Mammary epithelial cell (primary cell): ENCODE measurements at regions of chr12 and their contacts with region 1.

Region 1: DNA sequence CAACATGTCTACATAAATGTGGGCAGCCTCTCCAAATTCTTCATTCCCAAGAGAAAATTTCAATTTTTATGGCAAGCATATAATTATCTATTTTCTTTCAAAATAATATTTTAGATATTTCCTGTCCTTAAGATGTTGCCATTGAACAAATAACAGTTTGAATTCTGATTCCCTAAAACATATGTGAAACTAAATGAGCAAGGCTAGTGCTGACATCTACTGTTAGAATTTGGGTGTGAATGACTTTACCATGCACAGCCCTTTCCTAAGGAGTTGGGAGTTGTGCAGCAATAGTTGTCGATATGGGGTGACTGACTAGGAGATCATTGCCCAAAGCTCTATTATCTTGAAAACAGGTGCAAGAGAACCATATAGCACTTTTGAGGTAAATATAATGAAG is 108.2 kb upstream of the SLC38A4 start:
- DNase-seq: peak; percentile 52
- H3K4me3 ChIP-seq: no peak overlapping the region
- H3K27ac ChIP-seq: no peak overlapping the region
- H3K4me1 ChIP-seq: peaks cover 8% of the 10 kb centered on the region
- H3K27me3 ChIP-seq: no peaks in the 10 kb centered on the region
- CTCF ChIP-seq: peak; percentile 70 to 75

Region 2: DNA sequence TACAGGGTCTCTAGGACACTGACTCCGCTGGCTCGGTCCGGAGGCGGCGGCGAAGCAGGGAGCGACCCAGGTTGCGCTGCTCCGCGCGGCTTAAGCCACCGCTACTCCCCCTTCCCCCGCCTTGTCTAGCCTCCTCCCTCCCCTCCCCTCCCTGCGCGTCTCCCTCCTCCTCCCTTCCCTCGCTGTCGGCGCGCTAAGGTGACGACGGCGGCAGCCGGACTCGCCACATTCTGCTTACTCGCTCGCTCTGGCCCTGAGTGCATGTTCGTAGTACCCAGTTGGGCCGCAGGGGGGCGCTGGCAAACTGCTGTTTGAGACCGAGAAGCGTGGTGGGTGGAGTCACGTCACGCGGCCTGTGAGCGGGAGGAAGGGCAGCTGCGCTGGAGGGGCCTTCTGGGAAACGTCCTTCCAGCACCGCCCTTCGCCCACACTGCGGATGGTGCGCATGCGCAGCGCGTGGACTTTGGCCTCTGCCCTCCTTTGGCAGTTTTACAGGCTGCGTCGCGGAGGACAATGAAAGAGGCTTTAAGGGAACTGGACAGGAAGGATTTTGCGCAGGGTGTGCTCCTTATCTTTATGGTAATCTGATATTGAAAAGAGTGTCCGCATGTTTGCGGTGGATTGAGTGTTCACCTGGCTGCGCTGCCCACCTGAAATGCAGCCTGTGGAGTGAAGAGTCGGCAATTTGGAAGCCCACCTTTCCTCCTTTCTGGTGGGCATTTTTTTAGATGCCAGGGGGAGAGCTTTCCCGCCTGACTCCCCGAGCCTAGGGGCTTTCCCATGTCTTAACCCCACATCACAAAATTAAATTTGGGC is 943.3 kb before region 1 on chr12 and contains the start of gene SCAF11:
- CTCF ChIA-PET with region 1: no interaction called
- dilution Hi-C with region 1: no loop called
- in situ Hi-C with region 1: no loop called
- intact Hi-C with region 1: loop called (anchors 1 kb)
- DNase-seq: peak; percentile 100
- H3K4me3 ChIP-seq: peak within 1 kb of the TSS; percentile 53 to 96 (median 67)
- H3K27ac ChIP-seq: peak within 1 kb of the TSS; percentile 83
- H3K4me1 ChIP-seq: peaks cover 23% of the 10 kb centered on the region
- H3K27me3 ChIP-seq: no peaks in the 10 kb centered on the region
- CTCF ChIP-seq: peak; percentile 92 to 95
- total RNA-seq, gene SCAF11: 99.2 to 100 TPM

Region 3: GRCh38 chr12:46124848-46125619 is 808.9 kb before region 1 on chr12:
- CTCF ChIA-PET with region 1: no interaction called
- dilution Hi-C with region 1: no loop called
- in situ Hi-C with region 1: no loop called
- intact Hi-C with region 1: loop called (anchors 2 kb)
- DNase-seq: peak; percentile 74
- H3K4me3 ChIP-seq: peak overlapping the region in 1 of 3 experiments; percentile 32
- H3K27ac ChIP-seq: no peak overlapping the region
- H3K4me1 ChIP-seq: peaks cover 10% of the 10 kb centered on the region
- H3K27me3 ChIP-seq: no peaks in the 10 kb centered on the region
- CTCF ChIP-seq: peak; percentile 71 to 73

Region 4: DNA sequence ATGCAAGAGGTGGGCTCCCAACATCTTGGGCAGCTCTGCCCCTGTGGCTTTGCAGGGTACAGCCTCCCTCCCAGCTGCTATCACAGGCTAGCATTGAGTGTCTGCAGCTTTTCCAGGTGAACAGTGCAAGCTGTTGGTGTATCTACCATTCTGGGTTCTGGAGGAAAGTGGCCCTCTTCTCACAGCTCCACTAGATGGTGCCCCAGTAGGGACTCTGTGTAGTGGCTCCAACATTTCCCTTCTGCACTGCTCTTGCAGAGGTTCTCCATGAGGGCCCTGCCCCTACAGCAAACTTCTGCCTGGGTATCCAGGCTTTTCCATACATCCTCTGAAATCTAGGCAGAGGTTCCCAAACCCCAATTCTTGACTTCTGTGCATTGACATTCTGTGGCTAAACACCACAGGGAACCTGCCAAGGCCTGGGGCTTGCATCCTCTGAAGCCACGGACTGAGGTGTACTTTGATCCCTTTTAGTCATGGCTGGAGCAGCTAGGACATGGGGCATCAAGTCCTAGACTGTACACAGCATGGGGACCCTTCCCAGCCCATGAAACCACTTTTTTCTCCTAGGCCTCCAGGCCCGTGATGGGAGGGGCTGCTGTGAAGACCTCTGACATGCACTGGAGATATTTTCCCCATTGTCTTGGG is 641.1 kb before region 1 on chr12:
- CTCF ChIA-PET with region 1: no interaction called
- dilution Hi-C with region 1: no loop called
- in situ Hi-C with region 1: no loop called
- intact Hi-C with region 1: loop called (anchors 2 kb)
- DNase-seq: peak; percentile 7
- H3K4me3 ChIP-seq: no peak overlapping the region
- H3K27ac ChIP-seq: no peak overlapping the region
- H3K4me1 ChIP-seq: no peaks in the 10 kb centered on the region
- H3K27me3 ChIP-seq: no peaks in the 10 kb centered on the region
- CTCF ChIP-seq: peak in 1 of 2 donors; percentile 52

Region 5: DNA sequence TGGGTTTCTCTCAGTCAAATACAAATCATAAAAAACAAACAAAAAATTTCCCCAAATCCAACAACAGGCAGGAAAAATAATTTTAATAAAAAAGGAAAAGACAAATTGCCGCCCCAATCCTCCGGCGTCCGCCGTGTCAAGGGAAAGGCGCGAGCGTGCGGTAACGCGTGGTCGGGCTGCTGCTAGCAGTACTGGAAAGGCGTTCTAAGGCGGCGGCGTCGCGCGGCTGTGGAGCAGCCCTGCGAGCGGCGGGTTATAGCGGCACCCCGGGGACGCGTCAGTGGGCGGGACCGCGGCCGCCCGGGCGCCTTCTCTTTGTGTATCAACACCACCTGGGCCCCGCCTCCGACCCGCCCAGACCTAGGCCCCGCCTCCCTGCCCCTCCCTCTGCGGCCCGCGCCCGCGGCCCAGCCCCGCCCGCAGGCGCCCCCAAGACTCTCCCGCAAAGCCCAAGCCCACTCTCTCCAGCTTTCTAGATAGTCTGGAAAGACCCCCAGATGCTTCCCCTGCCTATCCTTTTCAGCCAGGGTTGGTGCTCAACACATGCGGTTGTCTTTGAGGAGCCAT is 561.3 kb before region 1 on chr12 and contains the start of gene SLC38A2:
- CTCF ChIA-PET with region 1: no interaction called
- dilution Hi-C with region 1: no loop called
- in situ Hi-C with region 1: no loop called
- intact Hi-C with region 1: loop called (anchors 5 kb)
- DNase-seq: peak; percentile 91
- H3K4me3 ChIP-seq: peak within 1 kb of the TSS; percentile 91 to 95 (median 92)
- H3K27ac ChIP-seq: peak within 1 kb of the TSS; percentile 98
- H3K4me1 ChIP-seq: peaks cover 27% of the 10 kb centered on the region
- H3K27me3 ChIP-seq: no peaks in the 10 kb centered on the region
- CTCF ChIP-seq: no peak
- total RNA-seq, gene SLC38A2: 774 to 995 TPM

Region 6: DNA sequence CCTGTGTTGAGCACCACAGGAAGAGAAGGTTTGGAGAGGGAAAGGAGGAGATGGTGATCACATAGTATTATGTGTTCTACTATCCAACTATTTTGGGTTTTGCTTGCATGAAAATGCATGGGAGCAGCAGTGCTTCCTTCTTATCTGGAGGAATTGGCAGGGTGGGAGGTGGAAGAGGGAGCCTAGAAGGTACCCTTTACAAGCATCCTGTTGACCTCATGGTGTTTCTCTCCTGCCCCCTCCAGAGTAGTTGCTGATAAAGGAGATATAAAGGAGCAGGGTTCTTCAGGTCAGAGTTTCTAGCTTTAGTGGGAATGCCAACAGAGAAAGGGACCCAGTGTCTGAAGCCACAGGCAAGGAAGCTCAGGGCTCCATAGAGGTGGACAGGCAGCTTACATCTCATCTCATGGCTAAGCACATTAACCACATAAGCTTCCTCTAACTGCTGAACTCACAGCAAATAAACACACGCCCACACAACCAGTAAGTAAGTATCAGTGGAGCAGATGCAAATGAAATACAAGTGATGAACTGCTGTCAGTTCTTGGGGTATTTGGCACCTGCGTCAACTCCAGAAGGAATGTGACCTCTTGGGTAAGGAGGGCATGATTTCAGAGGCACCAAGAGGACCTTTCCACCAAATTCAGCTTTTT is 387.2 kb before region 1 on chr12:
- CTCF ChIA-PET with region 1: no interaction called
- dilution Hi-C with region 1: no loop called
- in situ Hi-C with region 1: no loop called
- intact Hi-C with region 1: loop called (anchors 5 kb)
- DNase-seq: peak; percentile 71
- H3K4me3 ChIP-seq: no peak overlapping the region
- H3K27ac ChIP-seq: peak overlapping the region; percentile 100
- H3K4me1 ChIP-seq: peaks cover 56% of the 10 kb centered on the region
- H3K27me3 ChIP-seq: no peaks in the 10 kb centered on the region
- CTCF ChIP-seq: no peak

Region 7: GRCh38 chr12:46983393-46984266 is 49.7 kb after region 1 on chr12:
- CTCF ChIA-PET with region 1: no interaction called
- dilution Hi-C with region 1: no loop called
- in situ Hi-C with region 1: no loop called
- intact Hi-C with region 1: loop called (anchors 2 kb)
- DNase-seq: peak; percentile 60
- H3K4me3 ChIP-seq: no peak overlapping the region
- H3K27ac ChIP-seq: no peak overlapping the region
- H3K4me1 ChIP-seq: peaks cover 20% of the 10 kb centered on the region
- H3K27me3 ChIP-seq: no peaks in the 10 kb centered on the region
- CTCF ChIP-seq: peak; percentile 85 to 93